Mucosa of descending colon (tissue), 3 donors: ENCODE measurements at regions of chr6 and their contacts with region 1.

Region 1: DNA sequence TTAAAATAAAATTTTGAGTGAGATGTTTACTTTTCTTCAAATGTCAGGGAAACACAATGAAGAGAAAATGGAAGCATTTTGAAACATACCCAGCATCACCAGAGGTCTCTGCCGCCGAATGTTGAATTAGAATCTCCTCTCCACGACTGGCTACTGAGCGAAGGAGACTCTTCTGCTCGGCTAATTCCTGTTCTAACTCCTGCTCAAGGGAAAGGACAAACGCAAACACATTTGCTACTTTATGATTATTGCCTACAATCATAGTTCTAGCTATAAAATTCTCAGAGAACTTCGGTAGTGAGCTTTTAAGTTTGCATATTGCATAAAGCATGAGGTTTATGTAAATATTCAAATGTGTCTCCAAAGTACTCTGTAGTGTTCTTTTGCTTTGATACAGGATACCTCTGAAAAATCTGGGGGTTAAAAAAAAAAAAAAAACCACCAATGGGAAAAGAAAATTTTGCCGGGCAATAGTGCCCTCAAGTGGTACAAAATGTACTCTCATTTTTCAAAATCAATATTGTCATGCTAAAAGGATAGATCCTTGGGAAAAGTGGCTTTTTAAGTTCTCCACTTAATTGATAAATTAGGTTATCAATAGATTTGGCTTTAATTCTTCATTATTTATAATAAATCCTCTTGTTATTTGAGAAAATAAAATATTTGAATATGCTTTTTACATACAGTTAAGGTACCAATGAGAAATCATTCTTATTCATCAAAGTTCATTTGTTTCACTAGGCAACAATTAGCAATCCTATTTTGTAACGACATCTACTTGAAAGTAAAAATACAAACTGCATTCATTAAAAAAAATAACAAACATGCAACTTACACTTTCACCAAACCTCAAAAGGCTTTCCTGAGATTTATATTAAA is 369.0 kb downstream of the SYNE1 start:
- DNase-seq: peak in 1 of 3 donors; percentile 52
- ATAC-seq: peak; percentile 88
- H3K4me3 ChIP-seq: no peak overlapping the region
- H3K4me1 ChIP-seq: peaks cover 29% of the 10 kb centered on the region
- CTCF ChIP-seq: peak; percentile 8

Region 2: DNA sequence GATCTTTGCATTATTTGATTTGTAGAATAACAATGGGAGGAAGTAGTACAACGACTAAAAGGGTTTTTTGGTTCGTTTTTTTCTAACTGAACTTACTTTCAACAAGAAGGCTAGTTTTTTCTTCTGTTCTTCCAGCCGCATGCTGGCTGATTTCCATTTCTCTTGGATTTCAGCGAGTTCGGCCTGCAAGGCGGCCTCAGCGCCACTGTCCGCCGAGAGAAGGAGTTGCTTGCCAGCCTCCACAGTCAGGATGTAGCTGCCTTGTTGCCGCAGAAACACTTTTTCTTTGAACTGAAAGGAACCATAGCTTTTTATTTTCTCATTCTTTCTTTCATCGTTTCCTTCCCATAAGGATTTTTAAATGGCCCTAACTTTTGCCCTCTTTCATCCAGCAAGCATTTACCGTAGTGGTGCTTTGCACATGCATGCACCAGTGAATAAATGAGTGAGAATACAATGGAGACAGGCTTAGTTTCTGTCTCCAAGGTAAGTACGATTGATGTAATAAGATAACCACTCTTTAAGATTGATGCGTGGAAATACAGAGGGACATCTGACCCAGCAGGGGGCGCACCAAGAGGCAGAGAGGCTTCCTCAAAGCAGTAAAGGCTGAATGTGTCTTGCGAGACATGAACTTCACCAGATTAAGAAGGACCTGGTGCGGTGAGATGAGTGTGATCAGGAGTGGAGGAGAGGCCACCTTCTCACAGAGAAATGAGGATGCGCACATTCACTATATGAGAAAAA is 62.0 kb before region 1 on chr6:
- intact Hi-C with region 1: loop called in 1 of 2 experiments (anchors 10 kb)
- DNase-seq: peak in 2 of 3 donors; percentile 57 to 66
- ATAC-seq: peak; percentile 47
- H3K4me3 ChIP-seq: no peak overlapping the region
- H3K4me1 ChIP-seq: no peaks in the 10 kb centered on the region
- CTCF ChIP-seq: no peak